ENCODE measurements at regions of chr12 and their contacts with region 1.

Region 1: DNA sequence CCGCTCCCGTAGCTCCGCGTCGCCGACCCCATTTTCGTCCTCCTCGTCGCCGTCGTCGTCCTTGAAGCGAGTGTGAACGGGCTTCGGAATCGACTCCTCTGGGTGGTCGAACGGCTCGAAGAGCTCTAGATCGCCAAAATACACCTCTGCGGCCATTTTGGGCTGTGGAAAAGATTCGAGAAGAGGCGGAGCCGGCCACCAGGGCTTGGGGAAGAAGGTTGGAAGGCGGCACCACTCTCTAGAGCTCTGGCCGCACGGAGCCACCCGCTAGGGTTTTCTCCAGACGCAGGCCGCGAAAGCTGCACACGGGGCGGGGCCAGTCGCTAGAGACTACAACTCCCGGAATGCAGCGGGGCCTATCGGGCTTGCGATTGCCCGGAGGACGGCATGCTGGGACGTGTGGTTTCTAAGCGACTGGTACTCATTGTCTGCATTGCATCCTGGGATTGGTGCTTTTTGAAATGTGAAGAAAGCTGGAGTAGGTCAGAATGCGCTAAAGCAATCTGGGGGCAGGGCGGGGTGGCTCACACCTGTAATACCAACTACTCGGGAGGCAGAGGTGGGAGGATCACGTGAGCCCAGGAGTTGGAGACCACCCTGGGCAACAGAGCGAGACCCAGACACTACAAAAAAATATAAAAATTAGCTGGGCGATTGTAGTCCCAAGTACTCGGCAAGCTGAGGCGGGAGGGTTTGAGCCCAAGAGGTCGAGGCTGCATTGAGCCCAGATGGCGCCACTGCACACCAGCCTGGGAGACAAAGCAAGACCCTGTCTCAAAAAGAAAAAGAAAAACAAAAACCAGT is at the start of gene ZCCHC8:
- DNase-seq: peak; percentile 89 to 99 (median 92)
- ATAC-seq: peak; percentile 91
- H3K4me3 ChIP-seq: peak within 1 kb of the TSS; percentile 94
- H3K27ac ChIP-seq: peak within 1 kb of the TSS; percentile 99
- H3K4me1 ChIP-seq: peaks cover 6 to 11% of the 10 kb centered on the region in 2 experiments; a peak in 3 of 5 replicates
- H3K27me3 ChIP-seq: no peaks in the 10 kb centered on the region
- CTCF ChIP-seq: peak in 2 of 3 experiments; percentile 12 to 16; a peak in 2 of 6 replicates
- EP300 ChIP-seq: peak; percentile 23; the same call in 1 of the 2 replicates
- POLR2A ChIP-seq: peak; percentile 96
- RAD21 ChIP-seq: no peak
- polyA plus RNA-seq, gene ZCCHC8: 14.8 to 20.7 TPM

Region 2: DNA sequence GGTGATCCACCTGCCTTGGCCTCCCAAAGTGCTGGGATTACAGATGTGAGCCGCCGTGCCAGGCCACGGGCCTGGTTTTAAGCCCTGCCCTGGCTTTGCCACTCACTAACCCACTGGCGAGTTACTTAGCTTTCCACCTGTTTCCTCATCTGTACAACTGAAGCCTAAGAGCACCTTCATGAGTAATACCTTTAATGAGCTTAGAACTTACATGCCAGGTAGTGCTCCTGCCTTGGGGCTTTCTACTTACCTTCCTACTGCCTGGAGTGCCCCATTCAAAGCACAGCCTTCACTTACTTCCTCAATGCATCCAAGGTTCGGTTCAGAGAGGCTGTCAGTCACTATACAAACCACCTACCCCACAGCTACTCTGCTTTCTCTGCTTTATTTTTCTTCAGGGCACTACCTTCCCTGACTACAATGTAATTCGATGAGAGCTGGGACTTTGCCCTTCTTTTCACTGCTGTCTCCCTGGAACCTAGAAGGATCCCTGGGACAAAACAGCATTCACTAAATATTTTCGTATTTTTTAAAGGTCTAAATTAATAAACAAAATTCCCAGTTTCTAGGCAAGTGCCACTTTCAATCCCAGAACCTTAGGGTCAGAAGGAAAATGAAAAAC is 14.0 kb before region 1 on chr12:
- CTCF ChIA-PET with region 1: no interaction called
- POLR2A ChIA-PET with region 1: interaction called, 125 read pairs
- in situ Hi-C with region 1: no loop called
- intact Hi-C with region 1: no loop called
- DNase-seq: no peak
- ATAC-seq: no peak
- H3K4me3 ChIP-seq: no peak overlapping the region
- H3K27ac ChIP-seq: no peak overlapping the region
- H3K4me1 ChIP-seq: peaks cover 0 to 6% of the 10 kb centered on the region in 2 experiments; a peak in 2 of 5 replicates
- H3K27me3 ChIP-seq: no peaks in the 10 kb centered on the region
- CTCF ChIP-seq: no peak
- EP300 ChIP-seq: no peak
- POLR2A ChIP-seq: no peak
- RAD21 ChIP-seq: no peak

Region 3: DNA sequence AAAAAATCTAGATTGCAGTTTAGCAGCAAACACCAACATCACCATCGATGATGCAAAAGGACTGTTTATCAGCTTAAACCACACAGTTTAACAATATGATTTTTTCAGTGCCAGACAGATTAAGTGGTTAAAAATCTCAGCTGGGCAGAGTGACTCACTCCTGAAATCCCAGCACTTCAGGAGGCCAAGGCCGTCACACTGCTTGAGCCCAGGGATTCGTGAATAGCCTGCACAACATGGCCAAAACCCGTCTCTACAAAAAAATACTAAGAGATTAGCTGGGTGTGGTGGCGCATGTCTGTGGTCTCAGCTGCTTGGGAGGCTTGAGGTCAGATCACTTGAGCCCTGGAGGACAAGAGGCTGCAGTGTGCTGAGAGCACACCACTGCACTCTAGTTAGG is 17.0 kb after region 1 on chr12:
- CTCF ChIA-PET with region 1: no interaction called
- POLR2A ChIA-PET with region 1: interaction called, 96 read pairs
- in situ Hi-C with region 1: no loop called
- intact Hi-C with region 1: no loop called
- DNase-seq: no peak
- ATAC-seq: peak; percentile 36
- H3K4me3 ChIP-seq: no peak overlapping the region
- H3K27ac ChIP-seq: no peak overlapping the region
- H3K4me1 ChIP-seq: peaks cover 0 to 5% of the 10 kb centered on the region in 2 experiments; a peak in 2 of 5 replicates
- H3K27me3 ChIP-seq: no peaks in the 10 kb centered on the region
- CTCF ChIP-seq: no peak
- EP300 ChIP-seq: no peak
- POLR2A ChIP-seq: no peak
- RAD21 ChIP-seq: no peak

Region 4: DNA sequence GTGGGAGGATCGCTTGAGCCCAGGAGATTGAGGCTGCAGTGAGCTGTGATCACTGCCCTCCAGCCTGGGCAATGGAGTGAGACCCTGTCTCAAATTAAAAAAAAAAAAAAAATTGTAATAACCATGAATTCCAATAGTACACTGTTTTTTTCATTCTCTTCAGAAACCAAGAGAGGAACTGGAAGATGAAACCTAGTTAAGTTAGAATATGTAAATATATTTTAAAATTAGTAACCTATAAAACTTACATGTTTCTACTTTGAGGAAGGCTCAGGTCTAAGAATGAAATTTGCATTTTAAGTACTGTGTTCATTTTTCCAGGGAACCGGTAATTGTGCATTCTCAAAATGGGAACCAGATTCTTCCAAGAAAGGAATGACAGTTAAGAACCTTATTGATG is 45.0 kb after region 1 on chr12:
- CTCF ChIA-PET with region 1: no interaction called
- POLR2A ChIA-PET with region 1: no interaction called
- in situ Hi-C with region 1: no loop called
- intact Hi-C with region 1: no loop called
- DNase-seq: no peak
- ATAC-seq: no peak
- H3K4me3 ChIP-seq: no peak overlapping the region
- H3K27ac ChIP-seq: no peak overlapping the region
- H3K4me1 ChIP-seq: no peaks in the 10 kb centered on the region
- H3K27me3 ChIP-seq: no peaks in the 10 kb centered on the region
- CTCF ChIP-seq: no peak
- EP300 ChIP-seq: no peak
- POLR2A ChIP-seq: no peak
- RAD21 ChIP-seq: no peak

Region 5: DNA sequence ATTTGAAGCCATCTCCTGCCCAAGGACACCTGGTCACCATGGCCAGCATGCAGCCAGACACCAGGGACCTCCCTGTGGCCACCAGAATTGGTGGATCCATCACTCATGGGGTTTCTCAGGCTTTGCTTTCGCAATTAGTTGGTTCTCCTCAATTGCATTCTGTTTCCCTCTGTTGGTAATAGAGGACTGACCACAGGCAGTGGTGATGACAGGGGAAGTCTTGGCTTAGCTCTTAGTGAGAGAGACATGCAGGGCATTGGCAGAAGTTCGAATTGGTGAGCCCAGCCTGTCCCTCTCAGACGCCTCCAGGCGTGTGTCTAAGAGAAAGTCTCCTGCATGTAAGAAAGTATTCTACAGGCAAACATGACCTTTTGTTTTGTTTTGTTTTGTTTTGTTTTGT is 180.9 kb after region 1 on chr12:
- CTCF ChIA-PET with region 1: no interaction called
- POLR2A ChIA-PET with region 1: no interaction called
- in situ Hi-C with region 1: no loop called
- intact Hi-C with region 1: no loop called
- DNase-seq: no peak
- ATAC-seq: peak; percentile 47
- H3K4me3 ChIP-seq: no peak overlapping the region
- H3K27ac ChIP-seq: no peak overlapping the region
- H3K4me1 ChIP-seq: peaks cover 0 to 4% of the 10 kb centered on the region in 2 experiments; a peak in 2 of 5 replicates
- H3K27me3 ChIP-seq: peaks cover 8 to 14% of the 10 kb centered on the region in 2 experiments; a peak in 4 of 5 replicates
- CTCF ChIP-seq: no peak
- EP300 ChIP-seq: no peak
- POLR2A ChIP-seq: no peak
- RAD21 ChIP-seq: no peak

Region 6: GRCh38 chr12:122757568-122757967 is 256.7 kb after region 1 on chr12:
- CTCF ChIA-PET with region 1: no interaction called
- POLR2A ChIA-PET with region 1: no interaction called
- in situ Hi-C with region 1: no loop called
- intact Hi-C with region 1: no loop called
- DNase-seq: peak; percentile 26 to 48 (median 42)
- ATAC-seq: no peak
- H3K4me3 ChIP-seq: no peak overlapping the region
- H3K27ac ChIP-seq: no peak overlapping the region
- H3K4me1 ChIP-seq: peaks cover 19% of the 10 kb centered on the region in 2 experiments; a peak in 4 of 5 replicates
- H3K27me3 ChIP-seq: no peaks in the 10 kb centered on the region
- CTCF ChIP-seq: no peak
- EP300 ChIP-seq: peak; percentile 49; the same call in 1 of the 2 replicates
- POLR2A ChIP-seq: no peak
- RAD21 ChIP-seq: no peak

Region 7: GRCh38 chr12:122895705-122896636 is 395.1 kb after region 1 on chr12 and contains the start of gene VPS37B:
- CTCF ChIA-PET with region 1: no interaction called
- POLR2A ChIA-PET with region 1: no interaction called
- in situ Hi-C with region 1: no loop called
- intact Hi-C with region 1: no loop called
- DNase-seq: peak; percentile 92 to 99 (median 98)
- ATAC-seq: peak; percentile 83
- H3K4me3 ChIP-seq: peak within 1 kb of the TSS; percentile 86
- H3K27ac ChIP-seq: peak within 1 kb of the TSS; percentile 92
- H3K4me1 ChIP-seq: peaks cover 16 to 41% of the 10 kb centered on the region in 2 experiments
- H3K27me3 ChIP-seq: no peaks in the 10 kb centered on the region
- CTCF ChIP-seq: 0 out of 6 replicates have a peak, but pooled peaks of 1 of the 3 experiments have one; percentile 2
- EP300 ChIP-seq: peak; percentile 48
- POLR2A ChIP-seq: peak; percentile 90
- RAD21 ChIP-seq: peak in 1 of 2 experiments; percentile 15; a peak in 1 of 4 replicates
- polyA plus RNA-seq, gene VPS37B: 0.28 to 0.34 TPM